ENCODE measurements at regions of chr14 and their contacts with region 1.

Region 1: DNA sequence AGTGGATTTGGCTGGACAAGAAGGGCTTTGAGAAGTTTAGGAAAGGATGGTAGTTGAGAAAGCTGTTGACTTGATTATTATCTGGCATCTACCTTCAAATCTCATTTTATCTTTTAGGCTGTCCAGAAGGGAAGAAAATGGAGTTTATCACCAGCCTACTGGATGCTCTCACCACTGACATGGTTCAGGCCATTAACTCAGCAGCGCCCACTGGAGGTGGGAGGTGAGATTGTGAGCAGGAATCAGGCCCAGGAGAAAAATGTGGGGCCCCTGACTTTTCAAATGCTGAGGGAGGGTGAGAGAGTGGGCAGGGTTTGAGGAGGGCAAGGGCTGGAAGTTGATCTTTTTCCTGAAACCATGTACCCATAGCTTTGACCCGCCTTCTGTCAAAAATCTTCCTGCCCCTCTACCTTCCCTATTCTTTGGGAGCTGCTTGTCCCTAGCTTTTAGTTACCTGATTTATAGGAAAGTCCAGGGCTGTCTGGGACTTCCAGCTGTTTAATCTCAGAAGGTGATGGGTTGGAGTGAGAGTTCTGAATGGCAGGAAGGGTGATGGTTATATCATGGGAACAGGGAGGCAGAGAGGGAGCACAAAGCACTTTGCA is 134.2 kb downstream of the SMOC1 start:
- DNase-seq: no peak
- H3K27ac ChIP-seq: no peak overlapping the region
- CTCF ChIP-seq: peak; percentile 42

Region 2: DNA sequence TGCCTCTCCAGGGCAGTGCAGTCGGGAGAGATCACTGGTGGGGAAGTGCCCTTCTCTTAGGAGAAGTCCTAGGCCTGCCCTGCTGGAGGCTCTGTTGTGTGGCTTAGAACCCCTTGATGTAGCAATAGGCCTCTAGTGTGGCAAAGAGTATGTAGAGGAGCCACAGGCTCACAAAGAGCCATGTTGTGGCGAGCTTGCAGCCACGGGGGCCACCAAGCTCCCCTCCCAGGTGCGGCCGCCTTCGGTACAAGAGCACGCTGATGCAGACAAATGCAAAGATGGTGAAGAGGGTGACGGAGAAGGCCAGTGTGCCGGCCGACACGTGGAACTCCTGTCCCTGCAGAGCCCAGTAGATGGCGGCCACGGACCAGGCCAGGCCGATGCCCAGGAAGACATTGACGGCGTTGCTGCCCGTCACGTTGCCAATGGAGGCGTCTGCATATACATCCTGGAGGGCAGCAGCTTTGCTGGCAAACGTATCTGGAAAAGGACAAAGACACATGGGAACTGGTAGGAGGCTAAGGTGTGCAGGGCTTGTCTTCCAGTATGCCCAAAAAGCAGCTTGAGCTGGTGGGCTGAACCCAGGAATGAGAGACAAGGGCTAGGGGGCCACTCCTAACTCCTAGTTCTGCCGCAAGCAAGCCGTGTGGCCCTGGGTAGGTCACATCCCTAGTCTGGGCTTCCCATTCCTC is 32.6 kb after region 1 on chr14:
- CTCF ChIA-PET with region 1: no interaction called
- POLR2A ChIA-PET with region 1: no interaction called
- DNase-seq: peak; percentile 58
- H3K27ac ChIP-seq: no peak overlapping the region
- CTCF ChIP-seq: peak; percentile 72

Region 3: GRCh38 chr14:70073924-70074566 is 60.7 kb after region 1 on chr14:
- CTCF ChIA-PET with region 1: interaction called, 10 read pairs
- POLR2A ChIA-PET with region 1: no interaction called
- DNase-seq: peak; percentile 75
- H3K27ac ChIP-seq: no peak overlapping the region
- CTCF ChIP-seq: peak; percentile 79